ENCODE measurements at regions of chr1 and their contacts with region 1.

Region 1: GRCh38 chr1:28172713-28173150 is 3.8 kb downstream of the PTAFR start:
- DNase-seq: peak; percentile 58
- H3K4me3 Mint-ChIP-seq: no peak overlapping the region
- H3K27ac Mint-ChIP-seq: no peak overlapping the region
- H3K4me1 Mint-ChIP-seq: peaks cover 41% of the 10 kb centered on the region
- H3K27me3 Mint-ChIP-seq: peaks cover 29% of the 10 kb centered on the region

Region 2: DNA sequence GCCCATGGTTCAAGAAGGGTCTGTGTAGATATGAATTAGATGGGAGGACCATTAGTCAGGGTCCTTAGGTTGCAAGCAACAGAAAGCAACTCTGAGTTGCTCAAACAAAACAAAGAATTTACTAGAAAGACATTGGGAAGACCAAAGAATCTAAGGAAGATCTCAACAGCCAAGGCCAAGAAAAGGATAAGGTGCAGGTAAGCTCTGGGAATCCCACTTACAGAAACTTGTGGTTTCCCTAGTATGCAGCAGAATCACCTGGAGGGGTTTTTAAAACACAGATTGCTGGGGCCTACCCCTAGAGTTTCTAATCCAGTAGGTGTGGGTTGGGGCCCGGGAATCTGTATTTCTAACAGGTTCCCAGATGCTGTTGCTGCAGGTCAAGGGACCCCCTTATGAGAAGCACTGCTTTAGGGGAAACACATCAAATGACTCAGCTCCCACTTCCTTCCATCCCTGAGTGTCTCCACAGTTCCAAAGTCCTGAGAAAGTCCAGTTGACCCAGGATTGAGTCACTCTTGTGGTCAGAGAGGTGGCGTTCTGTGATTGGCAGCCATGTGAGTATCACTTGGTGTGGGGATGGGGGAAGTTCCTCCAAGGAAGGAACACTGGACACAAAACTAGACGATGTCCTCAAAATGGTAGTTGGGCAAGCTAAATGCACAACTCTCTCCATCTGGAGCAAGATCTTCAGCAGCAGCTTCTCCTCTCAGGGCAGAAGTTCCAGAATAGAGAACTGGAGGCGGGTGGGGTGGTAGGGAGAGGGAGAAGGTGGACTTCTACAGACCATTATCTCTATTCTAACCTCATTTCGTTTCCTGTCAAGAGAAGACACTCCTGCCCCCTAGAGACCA is 60.1 kb before region 1 on chr1:
- CTCF ChIA-PET with region 1: no interaction called
- POLR2A ChIA-PET with region 1: no interaction called
- intact Hi-C with region 1: loop called (anchors 2 kb)
- DNase-seq: no peak
- H3K4me3 Mint-ChIP-seq: no peak overlapping the region
- H3K27ac Mint-ChIP-seq: no peak overlapping the region
- H3K4me1 Mint-ChIP-seq: peaks cover 7% of the 10 kb centered on the region
- H3K27me3 Mint-ChIP-seq: peaks cover 5% of the 10 kb centered on the region

Region 3: DNA sequence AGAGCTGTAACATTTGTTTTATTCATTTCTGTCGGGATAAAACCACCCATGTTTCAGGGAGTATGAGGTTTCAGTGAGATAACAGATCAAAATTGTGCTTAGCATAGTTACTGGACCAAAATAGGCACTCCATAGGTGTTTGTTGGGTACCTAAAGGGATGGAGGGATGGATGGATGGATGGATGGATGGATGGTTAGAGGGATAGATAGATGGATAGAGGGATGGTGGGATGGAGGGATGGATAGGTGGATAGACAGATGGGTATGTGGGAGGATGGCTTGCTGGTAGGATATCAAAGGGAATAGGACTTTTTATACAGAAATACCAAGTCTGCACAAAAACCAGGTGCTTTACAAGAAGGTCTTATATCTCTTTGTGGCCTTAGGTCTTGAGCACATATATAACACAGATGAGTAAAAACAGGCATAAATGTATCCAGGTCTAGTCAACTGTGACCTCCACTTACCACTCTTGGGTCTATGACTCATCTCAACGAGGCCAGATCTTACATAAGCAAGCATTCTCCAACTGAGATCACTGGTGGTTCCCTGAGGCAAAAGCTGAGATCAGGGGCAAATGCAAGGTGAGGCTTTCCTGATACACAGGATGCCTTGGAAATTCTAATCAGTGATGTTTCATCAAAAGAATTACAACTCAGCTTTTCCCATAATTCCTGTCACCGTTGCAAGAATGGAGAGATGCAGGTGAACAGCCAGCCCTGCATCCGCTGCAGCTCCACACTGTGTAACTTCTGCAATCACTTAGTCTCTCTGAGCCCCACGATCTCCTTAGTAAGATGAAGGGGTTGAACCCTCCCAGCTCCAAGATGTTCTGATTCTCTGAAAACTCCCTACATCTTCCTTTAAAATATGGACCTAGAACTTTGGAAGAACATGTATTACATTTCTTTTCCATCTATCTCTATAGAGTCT is 28.3 kb before region 1 on chr1:
- CTCF ChIA-PET with region 1: interaction called, 3 read pairs
- POLR2A ChIA-PET with region 1: interaction called, 4 read pairs
- intact Hi-C with region 1: loop called (anchors 1 kb)
- DNase-seq: peak; percentile 68
- H3K4me3 Mint-ChIP-seq: no peak overlapping the region
- H3K27ac Mint-ChIP-seq: no peak overlapping the region
- H3K4me1 Mint-ChIP-seq: peaks cover 18% of the 10 kb centered on the region
- H3K27me3 Mint-ChIP-seq: peaks cover 7% of the 10 kb centered on the region

Region 4: GRCh38 chr1:28581536-28582247 is 409.0 kb after region 1 on chr1:
- CTCF ChIA-PET with region 1: no interaction called
- POLR2A ChIA-PET with region 1: no interaction called
- intact Hi-C with region 1: no loop called
- DNase-seq: peak; percentile 97
- H3K4me3 Mint-ChIP-seq: peak overlapping the region; percentile 91
- H3K27ac Mint-ChIP-seq: peak overlapping the region; percentile 89
- H3K4me1 Mint-ChIP-seq: peaks cover 29% of the 10 kb centered on the region
- H3K27me3 Mint-ChIP-seq: no peaks in the 10 kb centered on the region